ENCODE measurements at regions of chr7 and their contacts with region 1.

Region 1: DNA sequence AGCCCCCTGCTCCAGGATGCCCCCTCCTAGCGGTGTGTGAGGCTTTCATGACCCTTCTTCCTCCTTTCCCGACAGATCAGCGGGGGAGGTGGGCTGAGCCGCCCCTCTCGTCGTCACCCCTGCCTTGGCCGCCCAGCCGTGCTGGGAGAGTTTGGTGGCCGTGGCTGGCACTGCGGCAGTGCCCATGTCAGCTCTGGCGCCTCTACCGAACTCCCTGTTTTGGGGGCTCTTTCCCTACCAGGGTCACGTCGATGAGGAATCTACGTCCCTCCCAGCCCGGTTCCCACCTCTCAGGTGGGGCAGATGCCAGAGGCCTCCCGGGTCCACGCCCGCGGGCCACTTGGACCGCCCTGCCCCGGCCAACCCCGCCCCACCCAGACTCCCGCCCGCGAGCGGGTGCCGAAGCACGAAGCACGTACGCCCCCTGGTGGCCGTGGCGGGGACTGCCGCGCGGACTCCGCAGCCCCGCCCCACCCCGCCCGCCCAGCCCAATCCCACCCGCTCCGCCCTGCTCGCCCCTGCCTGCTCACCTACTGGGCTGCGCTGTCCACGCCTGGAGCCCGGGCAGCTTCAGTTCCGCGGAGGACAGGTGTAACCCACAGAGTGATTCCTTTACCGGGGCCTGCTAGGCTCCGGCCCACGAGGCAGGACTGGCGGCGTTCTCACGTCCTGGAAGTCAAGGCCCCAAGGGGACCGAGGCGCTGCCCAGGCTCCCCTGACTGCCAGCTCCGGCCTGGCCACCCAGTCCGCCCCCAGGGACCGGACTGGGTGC is 127.1 kb downstream of the UBE2H start:
- H3K4me3 ChIP-seq: peak overlapping the region; percentile 65
- H3K27ac ChIP-seq: peak overlapping the region; percentile 54
- H3K4me1 ChIP-seq: no peaks in the 10 kb centered on the region
- CTCF ChIP-seq: peak; percentile 87

Region 2: DNA sequence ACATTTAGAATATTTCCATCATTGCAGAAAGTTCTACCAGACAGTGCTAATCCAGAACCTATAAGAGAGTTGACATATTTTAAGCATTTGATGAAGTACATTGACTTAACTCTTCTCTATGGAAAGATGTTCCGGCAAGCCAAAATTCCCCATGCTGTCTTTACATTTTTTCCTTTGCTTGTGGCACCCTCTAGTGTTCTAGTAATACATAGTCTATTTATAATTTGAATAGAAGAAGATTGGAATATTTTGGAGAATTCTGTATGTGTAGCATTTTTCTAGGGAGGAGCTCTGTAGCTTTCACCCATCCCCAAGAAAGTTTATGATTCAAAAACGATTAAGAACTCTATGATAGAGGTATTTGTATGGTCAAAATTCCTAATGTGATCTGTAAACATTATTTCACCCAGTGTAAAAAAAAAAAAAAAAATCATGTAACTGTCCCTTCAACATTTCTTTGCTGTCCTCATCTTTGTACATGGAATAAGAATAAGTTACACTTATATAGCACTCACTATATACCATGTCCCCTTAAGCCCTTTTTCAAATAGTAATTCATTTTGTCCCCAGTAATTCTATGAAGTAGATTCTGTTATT is 180.9 kb before region 1 on chr7:
- CTCF ChIA-PET with region 1: interaction called, 15 read pairs
- POLR2A ChIA-PET with region 1: interaction called, 3 read pairs
- H3K4me3 ChIP-seq: no peak overlapping the region
- H3K27ac ChIP-seq: no peak overlapping the region
- H3K4me1 ChIP-seq: 0 out of 2 replicates have a peak, but pooled peaks cover 5% of the 10 kb centered on the region
- CTCF ChIP-seq: no peak

Region 3: DNA sequence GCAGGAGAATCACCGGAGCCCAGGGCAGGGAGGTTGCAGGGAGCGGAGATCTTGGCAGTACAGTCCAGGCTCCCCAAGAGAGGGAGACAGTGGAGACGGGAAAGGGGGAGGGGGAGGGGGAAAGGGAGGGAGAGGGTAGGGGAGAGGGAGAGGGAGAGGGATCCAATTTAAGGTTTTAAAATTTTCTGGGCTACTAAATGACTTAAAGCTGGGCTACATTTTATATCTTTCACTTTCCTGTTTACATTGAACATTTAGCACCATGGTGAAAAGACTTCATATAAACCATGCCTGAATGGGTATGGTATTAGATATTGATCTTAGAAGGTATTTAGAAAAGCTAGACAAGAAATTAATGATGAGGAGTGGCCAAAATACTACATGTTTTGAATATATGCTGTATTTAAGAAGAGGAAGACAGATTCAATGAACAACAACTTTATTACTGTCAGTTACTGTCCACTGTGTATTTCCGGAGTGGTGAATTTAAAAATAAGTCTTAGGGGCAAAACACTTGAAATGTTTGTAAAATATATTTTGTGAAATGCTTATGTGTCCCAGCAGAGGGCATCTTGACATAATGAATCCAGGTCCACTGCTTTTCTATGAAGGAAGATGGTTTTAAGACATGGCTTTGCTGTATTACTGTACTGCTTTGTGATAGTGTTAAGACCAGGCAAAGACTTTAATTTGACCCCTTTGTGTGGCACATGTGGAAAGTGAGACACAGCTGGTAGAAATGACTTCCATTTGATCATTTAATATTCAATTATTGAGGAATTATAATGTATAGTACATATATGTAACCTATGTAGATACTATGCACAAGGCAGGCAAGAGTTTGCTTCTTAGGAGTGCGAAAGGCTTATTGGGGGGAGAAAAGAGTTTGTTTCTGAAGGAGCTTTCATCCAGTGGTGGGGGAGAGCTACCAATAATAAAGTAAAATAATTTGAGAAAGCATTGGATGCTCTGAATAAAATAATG is 161.4 kb before region 1 on chr7:
- CTCF ChIA-PET with region 1: interaction called, 22 read pairs
- POLR2A ChIA-PET with region 1: interaction called, 5 read pairs
- H3K4me3 ChIP-seq: no peak overlapping the region
- H3K27ac ChIP-seq: no peak overlapping the region
- H3K4me1 ChIP-seq: no peaks in the 10 kb centered on the region
- CTCF ChIP-seq: peak; percentile 37; the same call in 1 of the 2 replicates

Region 4: GRCh38 chr7:129780257-129780973 is 45.3 kb before region 1 on chr7:
- CTCF ChIA-PET with region 1: interaction called, 7 read pairs
- POLR2A ChIA-PET with region 1: interaction called, 22 read pairs
- H3K4me3 ChIP-seq: peak overlapping the region; percentile 81
- H3K27ac ChIP-seq: peak overlapping the region; percentile 78; the same call in 1 of the 2 replicates
- H3K4me1 ChIP-seq: no peaks in the 10 kb centered on the region
- CTCF ChIP-seq: peak; percentile 35; the same call in 1 of the 2 replicates

Region 5: GRCh38 chr7:129948877-129949291 is 123.2 kb after region 1 on chr7:
- CTCF ChIA-PET with region 1: interaction called, 27 read pairs
- POLR2A ChIA-PET with region 1: interaction called, 8 read pairs
- H3K4me3 ChIP-seq: peak overlapping the region; percentile 78
- H3K27ac ChIP-seq: peak overlapping the region; percentile 78
- H3K4me1 ChIP-seq: peaks cover 3% of the 10 kb centered on the region; the same call in 1 of the 2 replicates
- CTCF ChIP-seq: no peak

Region 6: GRCh38 chr7:130010689-130011412 is 185.2 kb after region 1 on chr7:
- CTCF ChIA-PET with region 1: interaction called, 51 read pairs
- POLR2A ChIA-PET with region 1: interaction called, 5 read pairs
- H3K4me3 ChIP-seq: no peak overlapping the region
- H3K27ac ChIP-seq: no peak overlapping the region
- H3K4me1 ChIP-seq: no peaks in the 10 kb centered on the region
- CTCF ChIP-seq: peak; percentile 87

Region 7: DNA sequence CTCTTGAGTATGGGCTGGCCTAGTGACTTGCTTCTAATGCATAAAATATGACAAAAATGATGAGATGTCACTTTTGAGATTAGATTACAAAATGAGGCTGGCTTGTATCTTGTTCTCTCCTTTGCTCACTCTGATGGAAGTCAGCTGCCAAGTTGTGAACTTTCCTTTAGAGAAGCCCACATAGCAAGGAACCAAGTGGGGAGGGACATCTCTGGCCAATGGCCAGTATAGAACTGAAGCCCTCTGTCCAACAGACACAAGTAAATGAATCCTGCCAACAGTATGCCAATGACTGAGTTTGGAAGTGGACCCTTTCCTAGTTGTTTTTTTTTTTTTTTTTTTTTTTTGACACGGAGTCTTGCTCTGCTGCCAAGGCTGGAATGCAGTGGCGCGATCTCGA is 222.1 kb after region 1 on chr7:
- CTCF ChIA-PET with region 1: no interaction called
- POLR2A ChIA-PET with region 1: no interaction called
- H3K4me3 ChIP-seq: no peak overlapping the region
- H3K27ac ChIP-seq: no peak overlapping the region
- H3K4me1 ChIP-seq: 0 out of 2 replicates have a peak, but pooled peaks cover 3% of the 10 kb centered on the region
- CTCF ChIP-seq: no peak